Colonic mucosa (tissue), 4 donors: ENCODE measurements at regions of chr12 and their contacts with region 1.

Region 1: DNA sequence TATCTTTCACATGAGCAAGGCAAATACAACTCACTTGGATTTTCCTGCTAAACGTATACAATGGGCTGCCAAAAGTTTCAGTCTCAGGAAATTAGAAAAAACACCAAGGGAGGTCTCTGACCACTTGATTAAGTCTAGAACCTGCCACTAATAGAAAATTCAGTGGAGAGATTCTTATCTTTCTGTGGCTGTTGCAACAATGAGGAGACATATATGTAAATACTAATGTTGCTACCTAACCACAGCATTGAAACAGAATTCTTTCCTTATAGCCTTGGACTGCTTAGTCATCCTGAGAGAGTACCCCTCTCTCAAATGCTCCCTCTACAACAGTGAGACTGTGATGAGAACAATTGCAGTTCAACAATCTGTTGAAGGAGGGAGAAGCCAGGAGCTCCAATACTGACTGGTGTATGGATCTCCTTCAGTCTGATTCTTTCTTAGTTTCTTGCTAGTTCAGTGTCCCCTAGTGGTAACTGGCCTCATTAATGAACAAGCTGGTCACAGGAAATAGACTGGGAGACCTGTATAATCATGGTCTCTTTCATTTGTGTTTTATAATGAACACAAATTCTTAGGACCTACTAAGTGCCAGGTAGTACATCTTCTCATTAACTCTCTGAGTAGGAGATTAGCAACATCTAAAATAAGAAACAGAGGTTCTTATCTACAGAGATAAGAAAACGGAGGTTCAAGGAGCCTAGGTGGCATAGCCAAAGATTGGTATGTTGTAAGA is 164.5 kb downstream of the SLC38A4 start:
- DNase-seq: peak; percentile 33
- H3K4me3 ChIP-seq: no peak overlapping the region
- H3K27ac ChIP-seq: no peak overlapping the region
- H3K4me1 ChIP-seq: peaks cover 2% of the 10 kb centered on the region
- H3K27me3 ChIP-seq: no peaks in the 10 kb centered on the region
- CTCF ChIP-seq: peak; percentile 85

Region 2: DNA sequence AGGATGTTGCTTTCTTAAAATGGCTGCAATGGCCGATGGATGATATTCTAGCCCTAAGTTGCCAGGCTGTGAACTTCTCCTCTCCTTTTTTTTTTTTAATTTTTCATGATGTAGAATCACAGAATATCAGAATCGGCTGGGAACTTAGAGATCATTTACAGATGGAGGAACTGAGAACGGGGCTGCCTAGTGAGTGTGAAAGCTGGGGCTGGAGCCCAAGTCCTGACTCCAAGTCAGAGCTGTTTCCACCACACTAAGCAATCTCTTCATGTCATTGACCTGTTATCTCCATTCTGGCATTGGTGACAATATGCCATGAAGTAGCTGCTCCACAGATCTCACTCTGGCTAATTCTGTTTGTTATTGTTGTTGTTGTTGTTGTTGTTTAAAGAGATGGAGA is 514.1 kb before region 1 on chr12:
- intact Hi-C with region 1: loop called (anchors 10 kb)
- DNase-seq: no peak
- H3K4me3 ChIP-seq: no peak overlapping the region
- H3K27ac ChIP-seq: no peak overlapping the region
- H3K4me1 ChIP-seq: no peaks in the 10 kb centered on the region
- H3K27me3 ChIP-seq: no peaks in the 10 kb centered on the region
- CTCF ChIP-seq: no peak

Region 3: GRCh38 chr12:46342562-46343033 is 318.7 kb before region 1 on chr12:
- intact Hi-C with region 1: loop called (anchors 5 kb)
- DNase-seq: peak; percentile 29
- H3K4me3 ChIP-seq: no peak overlapping the region
- H3K27ac ChIP-seq: no peak overlapping the region
- H3K4me1 ChIP-seq: no peaks in the 10 kb centered on the region
- H3K27me3 ChIP-seq: no peaks in the 10 kb centered on the region
- CTCF ChIP-seq: peak; percentile 50

Region 4: DNA sequence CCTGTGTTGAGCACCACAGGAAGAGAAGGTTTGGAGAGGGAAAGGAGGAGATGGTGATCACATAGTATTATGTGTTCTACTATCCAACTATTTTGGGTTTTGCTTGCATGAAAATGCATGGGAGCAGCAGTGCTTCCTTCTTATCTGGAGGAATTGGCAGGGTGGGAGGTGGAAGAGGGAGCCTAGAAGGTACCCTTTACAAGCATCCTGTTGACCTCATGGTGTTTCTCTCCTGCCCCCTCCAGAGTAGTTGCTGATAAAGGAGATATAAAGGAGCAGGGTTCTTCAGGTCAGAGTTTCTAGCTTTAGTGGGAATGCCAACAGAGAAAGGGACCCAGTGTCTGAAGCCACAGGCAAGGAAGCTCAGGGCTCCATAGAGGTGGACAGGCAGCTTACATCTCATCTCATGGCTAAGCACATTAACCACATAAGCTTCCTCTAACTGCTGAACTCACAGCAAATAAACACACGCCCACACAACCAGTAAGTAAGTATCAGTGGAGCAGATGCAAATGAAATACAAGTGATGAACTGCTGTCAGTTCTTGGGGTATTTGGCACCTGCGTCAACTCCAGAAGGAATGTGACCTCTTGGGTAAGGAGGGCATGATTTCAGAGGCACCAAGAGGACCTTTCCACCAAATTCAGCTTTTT is 114.5 kb before region 1 on chr12:
- intact Hi-C with region 1: no loop called
- DNase-seq: no peak
- H3K4me3 ChIP-seq: no peak overlapping the region
- H3K27ac ChIP-seq: no peak overlapping the region
- H3K4me1 ChIP-seq: no peaks in the 10 kb centered on the region
- H3K27me3 ChIP-seq: no peaks in the 10 kb centered on the region
- CTCF ChIP-seq: no peak